Activated CD4-positive, alpha-beta T cell treated with anti-CD3 and anti-CD28 coated beads, Interleukin-2, amount 10 ng/mL, durations not matched to agents 24 days and 14 days (primary cell): ENCODE measurements at regions of chr6 and their contacts with region 1.

Region 1: GRCh38 chr6:15327271-15327670 is 81.4 kb downstream of the JARID2 start:
- DNase-seq: peak; percentile 82
- H3K4me3 Mint-ChIP-seq: peak overlapping the region; percentile 7
- H3K27ac Mint-ChIP-seq: peak overlapping the region; percentile 21
- H3K4me1 Mint-ChIP-seq: peaks cover 73% of the 10 kb centered on the region
- H3K27me3 Mint-ChIP-seq: no peaks in the 10 kb centered on the region

Region 2: GRCh38 chr6:15264902-15265761 is 62.1 kb before region 1 on chr6:
- intact Hi-C with region 1: no loop called
- DNase-seq: no peak
- H3K4me3 Mint-ChIP-seq: peak overlapping the region; percentile 20
- H3K27ac Mint-ChIP-seq: no peak overlapping the region
- H3K4me1 Mint-ChIP-seq: peaks cover 75% of the 10 kb centered on the region
- H3K27me3 Mint-ChIP-seq: no peaks in the 10 kb centered on the region

Region 3: DNA sequence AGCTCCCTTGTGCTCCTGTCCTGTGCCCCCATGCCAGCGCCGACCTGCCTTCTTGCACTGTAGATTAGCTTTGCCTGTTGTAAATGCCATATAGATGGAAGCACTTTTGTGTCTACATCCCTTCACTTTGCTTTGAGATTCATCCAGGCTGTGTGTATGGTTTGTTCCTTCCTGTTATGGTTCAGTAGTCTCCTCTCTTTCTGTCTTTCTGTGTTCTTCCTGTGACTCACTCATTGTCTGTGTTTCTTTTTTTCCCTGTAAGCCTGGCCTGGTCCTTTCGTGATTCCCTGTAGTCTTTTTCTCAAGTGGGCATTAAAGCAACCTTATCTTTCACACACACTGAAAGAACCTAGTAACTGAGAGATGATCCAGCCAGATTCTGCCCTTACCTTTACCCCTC is 14.8 kb before region 1 on chr6:
- intact Hi-C with region 1: loop called (anchors 2 kb)
- DNase-seq: peak; percentile 68
- H3K4me3 Mint-ChIP-seq: peak overlapping the region; percentile 12
- H3K27ac Mint-ChIP-seq: peak overlapping the region; percentile 85
- H3K4me1 Mint-ChIP-seq: peaks cover 71% of the 10 kb centered on the region
- H3K27me3 Mint-ChIP-seq: no peaks in the 10 kb centered on the region

Region 4: GRCh38 chr6:15384901-15385300 is 57.6 kb after region 1 on chr6:
- intact Hi-C with region 1: no loop called
- DNase-seq: no peak
- H3K4me3 Mint-ChIP-seq: no peak overlapping the region
- H3K27ac Mint-ChIP-seq: peak overlapping the region; percentile 34
- H3K4me1 Mint-ChIP-seq: peaks cover 66% of the 10 kb centered on the region
- H3K27me3 Mint-ChIP-seq: no peaks in the 10 kb centered on the region

Region 5: GRCh38 chr6:15441215-15441868 is 114.1 kb after region 1 on chr6:
- intact Hi-C with region 1: loop called (anchors 2 kb)
- DNase-seq: peak; percentile 84
- H3K4me3 Mint-ChIP-seq: no peak overlapping the region
- H3K27ac Mint-ChIP-seq: no peak overlapping the region
- H3K4me1 Mint-ChIP-seq: peaks cover 70% of the 10 kb centered on the region
- H3K27me3 Mint-ChIP-seq: no peaks in the 10 kb centered on the region